G401 (cell line): ENCODE measurements at regions of chr11 and their contacts with region 1.

Region 1: GRCh38 chr11:70183483-70184169 is 19.5 kb upstream of the FADD start:
- DNase-seq: no peak

Region 2: GRCh38 chr11:69888483-69889076 is 295.0 kb before region 1 on chr11:
- in situ Hi-C with region 1: no loop called
- DNase-seq: peak; percentile 79

Region 3: DNA sequence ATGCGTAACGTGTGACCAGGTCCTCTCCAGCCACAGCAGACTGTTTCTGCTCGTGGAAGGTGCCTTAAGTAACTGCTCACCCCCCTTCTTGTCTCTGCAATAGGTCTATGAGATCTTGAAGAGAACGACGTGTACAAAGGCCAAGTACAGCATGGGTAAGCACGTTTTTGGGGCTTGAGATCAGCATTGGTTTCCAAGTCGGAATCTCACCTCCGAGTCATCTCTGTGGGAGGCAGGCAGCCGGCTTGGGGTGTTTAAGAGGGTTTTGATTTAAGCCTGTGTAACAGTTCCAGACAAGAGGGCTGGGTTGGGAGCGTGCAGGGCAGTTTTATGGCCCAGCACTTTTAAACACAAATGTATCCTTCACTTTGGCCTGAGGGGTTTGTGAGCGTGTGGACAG is 75.4 kb before region 1 on chr11:
- in situ Hi-C with region 1: loop called (anchors 10 kb)
- DNase-seq: no peak

Region 4: DNA sequence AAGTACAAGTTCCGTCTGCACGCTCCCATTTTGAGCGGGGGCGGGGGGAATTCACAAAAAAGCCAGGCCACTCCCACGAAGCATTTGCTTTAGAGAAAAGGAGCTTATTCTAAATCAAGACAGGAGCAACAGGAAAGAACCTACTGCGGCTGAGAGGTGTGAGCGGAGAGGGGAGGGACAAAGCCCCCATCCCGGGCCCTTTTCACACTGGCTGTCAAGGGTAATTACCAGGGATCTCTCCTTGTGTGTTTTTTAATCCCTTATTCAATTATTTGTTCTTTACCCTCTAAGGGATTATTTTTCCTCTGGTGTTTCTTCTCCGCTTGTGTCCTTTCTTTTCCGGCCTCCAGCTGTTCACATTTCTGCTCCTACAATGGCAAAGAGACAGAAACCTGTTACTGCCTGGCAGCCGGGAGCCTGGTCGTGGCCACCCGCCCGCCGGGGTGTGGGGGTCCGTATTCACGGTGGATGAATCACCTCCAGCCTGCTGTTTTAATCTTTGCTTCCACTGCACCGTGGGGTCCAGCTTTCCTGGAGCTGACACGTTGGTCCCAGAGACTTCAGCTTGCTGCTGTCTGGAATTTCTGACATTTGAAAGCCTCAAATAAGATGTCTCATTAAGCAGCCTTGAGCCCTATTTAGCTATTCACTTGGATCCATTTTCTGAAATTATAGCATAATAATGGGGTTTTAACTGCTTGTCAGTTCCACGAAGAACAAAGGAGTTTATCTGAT is 42.0 kb before region 1 on chr11:
- in situ Hi-C with region 1: no loop called
- DNase-seq: no peak

Region 5: GRCh38 chr11:70244698-70245097 is 61.1 kb after region 1 on chr11:
- in situ Hi-C with region 1: no loop called
- DNase-seq: no peak

Region 6: DNA sequence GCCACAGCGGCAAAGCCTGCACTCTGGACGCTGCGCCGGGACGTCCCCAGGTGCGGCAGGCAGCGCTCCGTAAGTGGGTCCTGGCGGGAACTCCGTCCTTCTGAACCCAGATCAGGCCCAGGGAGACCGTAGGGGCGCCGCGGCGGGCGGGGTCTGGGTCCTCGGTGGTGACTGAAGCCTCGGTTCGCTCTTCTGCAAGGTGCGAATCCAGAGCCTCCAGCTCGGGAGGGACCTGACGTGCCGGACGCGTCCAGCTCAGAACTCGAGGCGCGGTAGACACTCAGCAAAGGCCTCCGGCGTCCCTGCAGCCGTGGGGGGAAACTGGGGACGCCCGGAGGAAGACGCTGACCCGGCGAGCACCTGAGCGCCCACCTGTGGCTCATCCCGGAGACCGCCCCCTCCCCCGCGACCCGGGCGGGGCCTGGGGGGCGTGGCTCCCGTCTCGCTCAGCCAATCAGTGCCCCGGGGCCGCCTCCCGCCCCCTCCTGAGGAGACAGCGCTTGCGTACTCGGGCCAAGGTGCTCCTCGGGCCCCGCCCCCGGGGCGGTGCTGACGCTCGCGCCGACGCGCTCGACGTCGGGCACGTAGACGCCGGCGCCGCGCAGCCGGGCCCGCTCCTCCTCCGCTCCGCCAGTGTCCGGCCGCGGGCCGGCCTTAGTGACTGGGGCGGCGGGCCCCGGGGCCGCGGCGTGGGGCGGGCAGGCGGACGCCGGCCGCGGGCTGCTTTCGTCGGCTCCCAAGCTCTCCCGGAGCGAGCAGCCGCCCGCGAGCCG is 86.7 kb after region 1 on chr11 and contains the start of gene PPFIA1:
- in situ Hi-C with region 1: no loop called
- DNase-seq: peak; percentile 96
- total RNA-seq, gene PPFIA1: 29.7 and 45.9 TPM in 2 replicates